Posterior vena cava (tissue), 2 donors: ENCODE measurements at regions of chr19 and their contacts with region 1.

Region 1: DNA sequence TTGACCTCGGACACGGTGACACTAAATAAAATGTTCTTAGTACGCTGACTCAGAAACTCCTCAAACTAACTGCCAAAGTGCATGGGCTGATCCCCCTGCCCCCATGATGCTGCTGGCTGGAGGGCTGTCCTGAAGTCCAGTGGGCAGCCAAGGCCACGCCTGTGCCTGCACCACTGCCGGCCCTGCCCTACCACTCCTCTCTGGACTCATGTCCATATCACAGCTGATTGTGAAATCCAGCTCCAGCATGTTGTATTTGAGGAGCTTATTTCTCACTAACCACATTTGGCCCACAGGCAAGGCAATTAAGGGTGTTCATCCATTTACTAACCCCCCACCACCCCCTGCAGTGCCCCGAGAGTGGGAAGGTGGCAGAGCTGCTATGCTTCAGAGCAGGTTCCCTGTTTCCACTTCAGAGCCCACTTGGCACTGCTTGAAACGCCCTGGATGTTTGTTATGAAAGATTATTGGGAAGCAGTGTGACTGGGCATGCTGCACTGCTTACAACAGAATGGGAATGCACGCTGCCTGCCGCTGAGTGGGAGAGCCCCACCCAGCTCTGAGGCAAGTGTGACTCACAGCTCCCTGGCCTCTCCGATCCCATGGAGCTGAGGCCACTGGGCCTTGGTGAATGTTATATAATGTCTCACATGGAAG is 114.0 kb downstream of the UQCRFS1 start:
- DNase-seq: peak; percentile 95

Region 2: GRCh38 chr19:29263305-29264135 is 164.5 kb after region 1 on chr19:
- intact Hi-C with region 1: no loop called
- DNase-seq: no peak

Region 3: GRCh38 chr19:29337029-29337428 is 238.0 kb after region 1 on chr19:
- intact Hi-C with region 1: loop called in 1 of 2 experiments (anchors 5 kb)
- DNase-seq: no peak

Region 4: DNA sequence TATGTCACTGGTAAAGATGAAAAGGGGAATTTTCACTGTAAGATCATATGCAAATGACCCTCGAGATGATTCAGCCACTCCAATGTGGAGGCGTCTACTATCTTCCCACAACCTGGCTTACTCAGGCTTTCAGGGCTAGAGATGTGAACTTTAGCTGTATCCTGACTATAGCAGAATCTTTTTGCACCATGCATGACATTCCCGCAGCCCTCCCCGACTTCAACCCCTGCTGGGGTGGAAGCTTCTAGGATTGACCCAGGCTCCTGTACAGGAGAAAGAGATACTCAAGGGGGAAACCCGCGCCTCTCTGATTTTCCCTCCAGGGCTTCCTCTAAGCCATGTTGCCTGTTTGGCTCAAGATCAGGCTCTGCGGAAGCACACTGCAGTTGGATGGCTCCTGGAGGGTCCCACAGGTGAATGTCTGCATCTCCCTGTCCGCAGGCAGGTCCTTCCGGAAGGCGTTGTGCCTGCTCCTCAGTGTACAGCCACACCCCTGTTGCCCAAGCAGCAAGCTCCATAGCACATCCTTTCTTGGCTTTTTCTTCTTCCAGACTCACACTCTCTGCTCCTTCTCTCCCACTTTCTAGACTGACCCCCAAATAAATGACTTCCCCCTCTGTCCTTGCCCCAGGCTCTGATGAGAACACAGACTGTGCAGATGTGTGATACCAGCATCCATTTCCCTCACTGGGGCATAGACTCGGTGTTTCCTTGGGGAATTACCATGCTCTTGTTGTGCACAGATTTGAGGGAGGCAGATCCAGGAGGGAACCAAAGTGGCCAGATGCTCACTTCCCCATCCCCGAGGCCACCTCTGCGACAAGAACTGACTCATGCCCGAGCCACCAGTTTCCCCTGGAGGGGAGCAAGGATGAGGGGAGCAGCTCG is 478.0 kb after region 1 on chr19:
- intact Hi-C with region 1: no loop called
- DNase-seq: no peak